HCT116 (cell line): ENCODE measurements at regions of chr10 and their contacts with region 1.

Region 1: DNA sequence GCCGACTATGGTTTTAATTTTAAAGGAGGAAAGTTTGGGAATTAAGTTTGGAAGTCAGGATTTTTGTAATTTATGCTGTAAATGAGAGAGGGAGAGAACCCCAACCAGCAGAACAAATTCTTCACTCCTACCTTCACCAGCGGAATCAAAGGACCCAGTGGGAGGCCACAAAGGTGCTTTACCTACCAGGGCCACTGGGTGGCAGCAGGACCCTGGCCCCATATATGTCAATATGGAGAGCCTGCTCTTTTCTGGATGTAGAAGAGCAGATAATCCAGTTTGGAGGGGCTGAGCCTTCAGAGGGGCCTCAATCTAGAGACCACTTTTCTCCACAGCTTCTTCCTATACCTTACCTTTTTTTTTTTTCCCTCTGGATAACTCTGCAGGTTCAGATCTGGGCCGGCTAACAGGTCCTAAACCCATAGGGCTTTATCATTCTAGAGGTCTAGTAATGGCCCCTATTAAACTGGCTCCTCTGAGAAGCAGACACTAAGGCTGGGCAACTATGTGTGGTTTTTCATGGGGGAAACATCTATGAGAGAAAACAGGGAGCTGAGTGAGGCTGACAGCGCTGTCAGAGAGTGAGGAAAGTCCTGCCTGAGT is 8.5 kb upstream of the SCD start:
- DNase-seq: peak; percentile 56
- ATAC-seq: peak; percentile 74
- H3K4me3 ChIP-seq: no peak overlapping the region
- H3K27ac ChIP-seq: no peak overlapping the region; the same call in 1 of the 2 replicates
- H3K4me1 ChIP-seq: peaks cover 3 to 10% of the 10 kb centered on the region in 2 experiments; a peak in 3 of 4 replicates
- H3K27me3 ChIP-seq: 0 out of 2 replicates have a peak, but pooled peaks cover 3% of the 10 kb centered on the region
- CTCF ChIP-seq: peak in 2 of 3 experiments; percentile 99; a peak in 4 of 6 replicates
- POLR2A ChIP-seq: no peak
- RAD21 ChIP-seq: no peak

Region 2: DNA sequence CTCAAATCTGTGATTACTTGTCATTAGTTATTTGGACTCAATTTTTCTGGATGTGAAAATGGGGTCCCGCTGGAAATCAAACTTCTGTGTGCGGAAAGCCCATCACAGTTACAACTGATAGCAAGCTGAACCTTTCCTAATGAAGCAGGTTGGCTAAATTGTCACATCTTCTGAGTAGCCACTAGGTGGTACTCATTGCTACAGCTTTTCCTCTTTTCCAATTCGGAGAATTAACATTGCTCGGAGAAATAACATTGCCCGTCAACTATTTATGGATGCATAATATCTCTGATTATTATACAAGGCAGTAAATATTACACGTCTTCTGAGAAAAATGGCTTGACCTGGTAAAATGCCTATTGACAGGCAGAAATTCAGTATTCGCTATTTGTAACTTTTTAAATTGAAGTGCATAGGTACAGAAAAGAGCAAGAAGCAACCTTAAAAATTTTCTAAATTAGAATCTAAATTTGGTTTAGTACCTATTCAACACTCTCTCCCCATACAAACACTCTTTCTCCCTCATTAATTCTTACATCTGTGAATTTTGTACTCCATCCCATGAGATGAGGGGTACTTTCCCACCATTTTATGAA is 34.7 kb before region 1 on chr10:
- CTCF ChIA-PET with region 1: interaction called, 4 read pairs
- POLR2A ChIA-PET with region 1: no interaction called
- RAD21 ChIA-PET with region 1: interaction called in 1 of 2 experiments, 4 read pairs
- intact Hi-C with region 1: loop called (anchors 5 kb)
- DNase-seq: peak; percentile 32
- ATAC-seq: peak; percentile 87
- H3K4me3 ChIP-seq: no peak overlapping the region
- H3K27ac ChIP-seq: no peak overlapping the region
- H3K4me1 ChIP-seq: peaks cover 4 to 7% of the 10 kb centered on the region in 2 experiments; a peak in 2 of 4 replicates
- H3K27me3 ChIP-seq: no peaks in the 10 kb centered on the region; the same call in 1 of the 2 replicates
- CTCF ChIP-seq: peak; percentile 84 to 91 (median 87); a peak in 5 of 6 replicates
- POLR2A ChIP-seq: no peak
- RAD21 ChIP-seq: peak; percentile 89

Region 3: GRCh38 chr10:100373298-100374136 is 35.0 kb after region 1 on chr10:
- CTCF ChIA-PET with region 1: interaction called, 12 read pairs
- POLR2A ChIA-PET with region 1: interaction called, 52 read pairs
- RAD21 ChIA-PET with region 1: interaction called, 4 to 6 read pairs
- intact Hi-C with region 1: loop called (anchors 1 kb)
- DNase-seq: peak; percentile 100
- ATAC-seq: peak; percentile 81
- H3K4me3 ChIP-seq: peak overlapping the region; percentile 60 to 70
- H3K27ac ChIP-seq: peak overlapping the region; percentile 99
- H3K4me1 ChIP-seq: peaks cover 74 to 84% of the 10 kb centered on the region in 2 experiments
- H3K27me3 ChIP-seq: no peaks in the 10 kb centered on the region
- CTCF ChIP-seq: no peak
- POLR2A ChIP-seq: peak; percentile 87
- RAD21 ChIP-seq: no peak

Region 4: DNA sequence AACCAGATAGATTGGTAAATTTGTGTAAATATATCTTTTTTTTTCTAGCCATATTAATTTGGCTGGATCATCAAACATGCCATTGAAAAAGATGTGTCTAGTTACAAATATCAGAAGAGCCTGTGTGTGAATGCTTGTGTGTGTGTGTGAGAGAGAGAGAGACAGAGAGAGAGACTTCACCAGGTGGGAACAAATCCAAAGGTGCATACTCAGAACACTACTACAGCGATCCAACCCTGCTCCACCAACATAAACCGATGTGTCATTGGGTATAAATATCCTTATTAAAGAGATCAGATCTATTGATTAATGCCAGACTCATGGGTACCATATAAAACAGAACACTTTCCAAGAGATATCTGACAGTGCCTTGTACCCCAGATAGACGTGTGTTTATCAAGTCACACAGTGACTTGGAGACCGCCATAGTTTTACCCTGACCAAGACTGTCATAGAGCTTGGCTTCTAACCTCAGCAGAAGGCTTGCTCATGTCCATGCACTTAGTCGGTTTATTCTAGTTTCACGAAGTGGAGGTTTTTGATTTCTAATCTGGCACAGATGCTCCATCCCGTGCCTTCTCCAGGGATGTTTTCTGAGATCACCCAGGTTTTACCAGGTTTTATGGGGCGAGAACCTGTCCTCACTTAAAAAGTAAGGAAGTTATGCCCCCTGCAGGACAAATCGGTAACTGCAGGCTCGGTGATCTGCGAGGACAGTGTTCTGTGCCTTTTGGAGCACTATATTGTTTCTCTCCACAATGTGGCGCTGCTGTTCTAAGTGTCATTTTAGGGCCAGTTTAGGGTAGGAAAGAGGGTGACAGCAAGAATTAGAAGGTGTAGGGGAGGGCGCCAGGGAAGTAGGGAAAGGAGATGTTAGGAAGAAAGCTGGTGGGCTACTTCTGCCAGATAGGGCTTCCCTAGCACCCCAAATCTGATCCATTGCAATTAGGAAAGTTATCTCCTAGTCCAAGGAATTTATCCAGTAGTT is 95.0 kb after region 1 on chr10:
- CTCF ChIA-PET with region 1: interaction called, 22 read pairs
- POLR2A ChIA-PET with region 1: interaction called, 3 read pairs
- RAD21 ChIA-PET with region 1: interaction called, 4 to 8 read pairs
- intact Hi-C with region 1: loop called (anchors 1 kb)
- DNase-seq: peak; percentile 97
- ATAC-seq: peak; percentile 96
- H3K4me3 ChIP-seq: no peak overlapping the region
- H3K27ac ChIP-seq: no peak overlapping the region
- H3K4me1 ChIP-seq: peaks cover 0 to 9% of the 10 kb centered on the region in 2 experiments; a peak in 2 of 4 replicates
- H3K27me3 ChIP-seq: no peaks in the 10 kb centered on the region
- CTCF ChIP-seq: peak; percentile 100
- POLR2A ChIP-seq: no peak
- RAD21 ChIP-seq: peak; percentile 100